Gastrocnemius medialis (tissue), 4 donors: ENCODE measurements at regions of chr21 and their contacts with region 1.

Region 1: GRCh38 chr21:36419996-36420395 is 34.8 kb downstream of the CHAF1B start:
- DNase-seq: peak; percentile 77 to 84
- ATAC-seq: peak; percentile 90 to 94
- H3K4me3 ChIP-seq: no peak overlapping the region
- H3K27ac ChIP-seq: peak overlapping the region in 1 of 4 donors; percentile 30
- H3K4me1 ChIP-seq: peaks cover 0 to 3% of the 10 kb centered on the region in 2 donors
- H3K27me3 ChIP-seq: no peaks in the 10 kb centered on the region
- CTCF ChIP-seq: peak; percentile 76 to 84 (median 81)
- POLR2A ChIP-seq: no peak

Region 2: GRCh38 chr21:36589355-36589971 is 169.5 kb after region 1 on chr21:
- in situ Hi-C with region 1: loop called in 2 of 4 experiments (anchors 25 kb)
- intact Hi-C with region 1: loop called (anchors 1 kb)
- DNase-seq: peak in 1 of 2 donors; percentile 41
- ATAC-seq: peak in 1 of 2 donors; percentile 58
- H3K4me3 ChIP-seq: no peak overlapping the region
- H3K27ac ChIP-seq: no peak overlapping the region
- H3K4me1 ChIP-seq: no peaks in the 10 kb centered on the region
- H3K27me3 ChIP-seq: no peaks in the 10 kb centered on the region
- CTCF ChIP-seq: peak in 4 of 5 experiments; percentile 28 to 57 (median 42)
- POLR2A ChIP-seq: no peak